ENCODE measurements at regions of chr9 and their contacts with region 1.

Region 1: GRCh38 chr9:123225374-123225813 is 43.0 kb downstream of the STRBP start:
- DNase-seq: peak in 5 of 7 donors; percentile 18 to 56 (median 27)
- H3K4me3 ChIP-seq: no peak overlapping the region
- H3K27ac ChIP-seq: no peak overlapping the region
- H3K4me1 ChIP-seq: no peaks in the 10 kb centered on the region
- H3K27me3 ChIP-seq: no peaks in the 10 kb centered on the region
- CTCF ChIP-seq: peak in 5 of 6 experiments; percentile 6 to 34 (median 31)
- POLR2A ChIP-seq: no peak

Region 2: DNA sequence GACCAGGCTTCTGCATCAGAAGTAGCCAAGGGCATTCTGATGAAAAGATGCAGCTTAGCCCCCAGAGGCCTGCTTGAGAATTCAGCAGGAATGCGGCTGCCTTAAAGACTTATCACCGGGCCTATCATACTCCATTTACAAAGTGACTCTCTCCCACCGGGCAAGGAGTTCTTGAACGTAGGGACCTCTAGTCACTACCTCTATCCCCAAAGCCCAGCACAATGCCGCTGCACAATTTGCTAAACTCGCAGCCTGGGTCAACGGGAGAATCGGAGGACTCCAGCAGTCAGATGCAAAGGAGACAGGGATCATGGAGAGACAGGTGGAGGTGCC is 397.7 kb before region 1 on chr9:
- intact Hi-C with region 1: no loop called
- DNase-seq: peak in 1 of 7 donors; percentile 29
- H3K4me3 ChIP-seq: peak overlapping the region; percentile 83 to 90 (median 87)
- H3K27ac ChIP-seq: peak overlapping the region; percentile 58 to 94 (median 87)
- H3K4me1 ChIP-seq: peaks cover 0 to 25% of the 10 kb centered on the region in 2 donors
- H3K27me3 ChIP-seq: no peaks in the 10 kb centered on the region
- CTCF ChIP-seq: no peak
- POLR2A ChIP-seq: no peak

Region 3: GRCh38 chr9:123081824-123082223 is 143.6 kb before region 1 on chr9:
- intact Hi-C with region 1: loop called in 1 of 2 experiments (anchors 10 kb)
- DNase-seq: peak in 2 of 7 donors; percentile 30 to 31
- H3K4me3 ChIP-seq: no peak overlapping the region
- H3K27ac ChIP-seq: no peak overlapping the region
- H3K4me1 ChIP-seq: no peaks in the 10 kb centered on the region
- H3K27me3 ChIP-seq: no peaks in the 10 kb centered on the region
- CTCF ChIP-seq: peak; percentile 62 to 81 (median 72)
- POLR2A ChIP-seq: no peak

Region 4: DNA sequence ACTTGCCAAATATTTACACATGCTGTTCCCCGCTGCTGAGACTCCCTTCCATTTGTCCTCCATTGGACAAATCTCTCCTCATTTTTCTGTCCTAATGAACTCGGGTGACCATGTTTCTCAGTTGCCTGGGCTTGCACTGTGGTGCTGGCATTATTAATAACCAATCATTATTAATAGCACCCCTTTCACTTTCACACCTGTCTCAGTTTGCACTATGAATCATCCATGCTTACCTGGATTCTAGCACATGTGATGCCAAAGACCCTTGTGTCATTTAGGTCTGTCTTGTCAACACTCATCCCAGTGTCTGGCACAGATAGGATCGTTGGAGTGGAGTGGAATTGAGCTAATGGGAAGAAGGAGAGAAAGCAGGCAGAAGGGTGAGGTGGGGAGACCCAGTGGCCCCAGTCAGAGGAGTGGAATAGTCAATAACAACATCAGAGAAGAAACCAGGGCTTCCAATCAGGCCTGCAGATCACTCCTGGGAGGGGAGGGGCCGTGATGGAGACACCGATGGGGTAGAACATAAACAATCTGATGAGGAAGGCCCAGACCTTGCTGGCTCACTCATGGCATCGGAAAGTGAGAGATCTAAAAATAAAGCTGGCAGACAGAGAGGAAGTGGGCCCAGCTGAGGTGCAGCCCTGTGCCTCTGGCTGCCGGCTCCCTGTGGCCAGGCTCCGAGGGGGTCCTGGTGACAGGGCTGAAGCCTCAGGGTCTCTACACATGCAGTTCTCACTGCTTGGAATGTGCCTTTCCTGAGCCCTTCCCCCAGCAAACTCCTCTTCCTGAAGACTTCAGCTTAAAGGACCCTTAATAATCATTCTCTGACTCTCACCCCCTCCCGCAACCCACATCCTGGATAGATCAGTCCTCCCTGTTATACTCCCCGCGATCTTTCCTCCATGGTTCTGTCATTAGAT is 97.1 kb after region 1 on chr9:
- intact Hi-C with region 1: no loop called
- DNase-seq: no peak
- H3K4me3 ChIP-seq: no peak overlapping the region
- H3K27ac ChIP-seq: no peak overlapping the region
- H3K4me1 ChIP-seq: no peaks in the 10 kb centered on the region
- H3K27me3 ChIP-seq: no peaks in the 10 kb centered on the region
- CTCF ChIP-seq: no peak
- POLR2A ChIP-seq: no peak